B cell (primary cell): ENCODE measurements at regions of chr15 and their contacts with region 1.

Region 1: GRCh38 chr15:101008158-101009139 is 89.3 kb downstream of the LRRK1 start:
- DNase-seq: peak; percentile 91
- ATAC-seq: peak; percentile 95
- H3K4me3 ChIP-seq: peak overlapping the region; percentile 16 to 78 (median 59)
- H3K4me3 Mint-ChIP-seq: peak overlapping the region; percentile 92
- H3K27ac ChIP-seq: no peak overlapping the region
- H3K27ac Mint-ChIP-seq: peak overlapping the region; percentile 42
- H3K4me1 ChIP-seq: peaks cover 10 to 20% of the 10 kb centered on the region in 2 donors
- H3K4me1 Mint-ChIP-seq: peaks cover 20% of the 10 kb centered on the region
- H3K27me3 ChIP-seq: no peaks in the 10 kb centered on the region
- H3K27me3 Mint-ChIP-seq: no peaks in the 10 kb centered on the region
- CTCF ChIP-seq: peak; percentile 96

Region 2: DNA sequence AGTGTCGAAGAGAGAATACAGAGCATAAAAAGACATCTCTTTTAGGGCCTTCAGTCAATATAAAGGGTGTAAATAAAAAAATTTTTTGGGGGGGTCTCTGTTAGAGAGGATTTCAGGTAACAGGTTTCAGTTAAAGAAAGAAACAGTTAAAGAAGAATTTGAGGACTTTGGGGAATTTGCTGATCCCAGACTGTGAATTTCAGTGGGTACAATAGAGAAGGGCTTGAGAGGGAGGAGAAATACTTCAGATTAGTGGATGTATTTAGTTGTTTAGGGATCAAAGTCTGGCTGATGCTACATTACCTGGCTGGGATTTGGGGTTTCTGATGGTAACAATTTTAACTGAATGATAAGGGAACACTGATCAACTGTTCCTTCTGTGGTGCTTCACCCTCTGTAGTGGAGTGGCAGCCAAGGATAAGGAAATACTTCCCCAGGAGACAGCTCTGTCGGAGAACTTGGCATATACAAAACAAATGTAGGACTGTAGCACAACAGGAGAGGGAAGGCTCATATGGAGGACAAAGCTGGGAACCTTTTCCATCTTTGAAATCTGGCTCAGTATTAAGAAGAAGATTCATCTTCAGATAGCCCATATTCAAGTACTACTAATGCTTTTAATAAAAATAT is 1363.4 kb before region 1 on chr15:
- CTCF ChIA-PET with region 1: no interaction called
- POLR2A ChIA-PET with region 1: no interaction called
- intact Hi-C with region 1: no loop called
- DNase-seq: no peak
- ATAC-seq: no peak
- H3K4me3 ChIP-seq: no peak overlapping the region
- H3K4me3 Mint-ChIP-seq: no peak overlapping the region
- H3K27ac ChIP-seq: no peak overlapping the region
- H3K27ac Mint-ChIP-seq: peak overlapping the region; percentile 34
- H3K4me1 ChIP-seq: no peaks in the 10 kb centered on the region
- H3K4me1 Mint-ChIP-seq: peaks cover 3% of the 10 kb centered on the region
- H3K27me3 ChIP-seq: no peaks in the 10 kb centered on the region
- H3K27me3 Mint-ChIP-seq: no peaks in the 10 kb centered on the region
- CTCF ChIP-seq: no peak

Region 3: GRCh38 chr15:99928429-99928981 is 1079.9 kb before region 1 on chr15:
- CTCF ChIA-PET with region 1: interaction called, 3 read pairs
- POLR2A ChIA-PET with region 1: no interaction called
- intact Hi-C with region 1: loop called (anchors 5 kb)
- DNase-seq: peak; percentile 92
- ATAC-seq: peak; percentile 91
- H3K4me3 ChIP-seq: peak overlapping the region; percentile 44 to 72 (median 60)
- H3K4me3 Mint-ChIP-seq: peak overlapping the region; percentile 89
- H3K27ac ChIP-seq: peak overlapping the region; percentile 72 to 75
- H3K27ac Mint-ChIP-seq: peak overlapping the region; percentile 91
- H3K4me1 ChIP-seq: peaks cover 11 to 16% of the 10 kb centered on the region in 2 donors
- H3K4me1 Mint-ChIP-seq: peaks cover 10% of the 10 kb centered on the region
- H3K27me3 ChIP-seq: peaks cover 0 to 2% (median 0%) of the 10 kb centered on the region in 4 experiments
- H3K27me3 Mint-ChIP-seq: peaks cover 5% of the 10 kb centered on the region
- CTCF ChIP-seq: peak; percentile 61

Region 4: DNA sequence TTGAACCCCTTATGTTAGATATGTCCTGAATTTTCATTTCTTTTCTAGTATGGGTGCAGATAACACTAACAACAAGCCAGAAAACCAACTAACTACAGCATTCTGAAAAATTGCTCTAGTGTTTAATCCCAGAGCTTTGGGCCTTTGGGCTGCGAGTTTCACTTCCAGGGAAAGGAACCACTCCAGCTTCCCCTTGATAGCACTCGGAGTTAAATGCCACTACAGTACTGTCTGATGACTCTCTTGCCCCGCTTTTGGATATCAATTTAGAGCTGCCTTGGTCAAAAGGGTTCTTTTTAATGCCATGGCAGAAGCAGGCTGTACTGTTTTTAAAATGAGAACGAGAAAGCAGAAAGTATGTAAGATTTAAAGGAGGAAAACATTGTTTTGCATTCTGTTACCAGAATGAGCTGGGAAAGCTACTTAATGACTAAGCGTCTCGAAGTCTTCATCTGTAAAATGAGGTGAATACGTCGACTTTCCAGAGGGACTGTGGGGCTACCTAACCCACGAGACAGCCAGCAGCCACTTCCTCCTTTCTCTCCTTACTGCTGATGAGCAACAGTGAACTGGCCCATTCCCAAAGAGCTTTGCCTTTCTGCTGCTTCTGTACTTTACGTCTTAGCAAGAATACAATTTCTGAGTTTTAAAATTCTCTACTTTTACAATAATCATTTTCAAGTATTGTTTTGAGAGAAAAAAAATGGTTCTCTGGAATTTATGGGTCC is 975.9 kb before region 1 on chr15:
- CTCF ChIA-PET with region 1: no interaction called
- POLR2A ChIA-PET with region 1: no interaction called
- intact Hi-C with region 1: no loop called
- DNase-seq: no peak
- ATAC-seq: no peak
- H3K4me3 ChIP-seq: no peak overlapping the region
- H3K4me3 Mint-ChIP-seq: no peak overlapping the region
- H3K27ac ChIP-seq: no peak overlapping the region
- H3K27ac Mint-ChIP-seq: no peak overlapping the region
- H3K4me1 ChIP-seq: no peaks in the 10 kb centered on the region
- H3K4me1 Mint-ChIP-seq: no peaks in the 10 kb centered on the region
- H3K27me3 ChIP-seq: no peaks in the 10 kb centered on the region
- H3K27me3 Mint-ChIP-seq: peaks cover 6% of the 10 kb centered on the region
- CTCF ChIP-seq: no peak

Region 5: DNA sequence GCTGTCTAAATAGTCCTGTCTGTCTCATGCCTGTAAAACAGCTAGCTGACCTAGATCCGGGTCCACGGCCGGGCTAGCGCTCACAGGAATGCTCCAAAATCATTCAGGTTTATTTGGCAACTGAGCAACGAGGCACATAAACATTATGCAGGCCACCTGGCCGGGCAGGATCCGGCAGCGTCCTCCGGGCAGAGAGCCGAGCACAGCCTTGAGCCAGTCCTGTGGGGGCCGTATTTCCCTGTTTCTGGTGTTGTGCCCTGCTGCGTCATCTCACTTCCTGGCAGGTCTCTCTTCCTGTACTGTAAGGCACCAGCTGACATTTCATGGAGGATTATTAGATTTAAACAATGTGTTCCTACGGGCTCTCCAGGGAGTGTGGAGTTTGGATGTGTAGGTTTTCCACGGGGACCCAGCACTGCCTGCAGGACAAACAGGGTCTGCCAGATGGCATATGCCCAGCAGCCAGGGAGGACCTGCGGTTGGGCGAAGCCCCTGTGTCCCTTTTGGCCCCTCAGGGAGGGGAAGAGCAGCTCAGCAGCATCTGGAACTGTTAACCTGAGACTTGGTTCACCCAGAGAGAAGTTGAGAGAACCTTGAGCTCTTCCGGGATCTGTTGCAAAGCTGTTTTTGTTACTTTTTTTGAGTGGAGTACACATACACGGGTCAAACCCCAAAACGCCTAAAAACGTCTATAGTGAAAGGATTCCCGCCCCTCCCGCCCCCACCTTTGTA is 105.8 kb before region 1 on chr15:
- CTCF ChIA-PET with region 1: interaction called, 29 read pairs
- POLR2A ChIA-PET with region 1: no interaction called
- intact Hi-C with region 1: no loop called
- DNase-seq: no peak
- ATAC-seq: no peak
- H3K4me3 ChIP-seq: peak overlapping the region in 1 of 5 experiments; percentile 5
- H3K4me3 Mint-ChIP-seq: no peak overlapping the region
- H3K27ac ChIP-seq: no peak overlapping the region
- H3K27ac Mint-ChIP-seq: no peak overlapping the region
- H3K4me1 ChIP-seq: peaks cover 0 to 3% of the 10 kb centered on the region in 2 donors
- H3K4me1 Mint-ChIP-seq: peaks cover 1% of the 10 kb centered on the region
- H3K27me3 ChIP-seq: peaks cover 0 to 3% (median 0%) of the 10 kb centered on the region in 4 experiments
- H3K27me3 Mint-ChIP-seq: peaks cover 18% of the 10 kb centered on the region
- CTCF ChIP-seq: no peak

Region 6: GRCh38 chr15:100934726-100935125 is 73.7 kb before region 1 on chr15:
- CTCF ChIA-PET with region 1: interaction called, 72 read pairs
- POLR2A ChIA-PET with region 1: no interaction called
- intact Hi-C with region 1: no loop called
- DNase-seq: peak; percentile 50
- ATAC-seq: peak; percentile 65
- H3K4me3 ChIP-seq: no peak overlapping the region
- H3K4me3 Mint-ChIP-seq: peak overlapping the region; percentile 35
- H3K27ac ChIP-seq: no peak overlapping the region
- H3K27ac Mint-ChIP-seq: peak overlapping the region; percentile 73
- H3K4me1 ChIP-seq: peaks cover 50 to 51% of the 10 kb centered on the region in 2 donors
- H3K4me1 Mint-ChIP-seq: peaks cover 52% of the 10 kb centered on the region
- H3K27me3 ChIP-seq: no peaks in the 10 kb centered on the region
- H3K27me3 Mint-ChIP-seq: no peaks in the 10 kb centered on the region
- CTCF ChIP-seq: no peak

Region 7: GRCh38 chr15:100968050-100968966 is 40.1 kb before region 1 on chr15:
- CTCF ChIA-PET with region 1: interaction called, 25 read pairs
- POLR2A ChIA-PET with region 1: no interaction called
- intact Hi-C with region 1: no loop called
- DNase-seq: no peak
- ATAC-seq: no peak
- H3K4me3 ChIP-seq: no peak overlapping the region
- H3K4me3 Mint-ChIP-seq: no peak overlapping the region
- H3K27ac ChIP-seq: no peak overlapping the region
- H3K27ac Mint-ChIP-seq: no peak overlapping the region
- H3K4me1 ChIP-seq: peaks cover 5 to 6% of the 10 kb centered on the region in 2 donors
- H3K4me1 Mint-ChIP-seq: peaks cover 12% of the 10 kb centered on the region
- H3K27me3 ChIP-seq: peaks cover 0 to 10% (median 4%) of the 10 kb centered on the region in 4 experiments
- H3K27me3 Mint-ChIP-seq: peaks cover 6% of the 10 kb centered on the region
- CTCF ChIP-seq: no peak

Region 8: DNA sequence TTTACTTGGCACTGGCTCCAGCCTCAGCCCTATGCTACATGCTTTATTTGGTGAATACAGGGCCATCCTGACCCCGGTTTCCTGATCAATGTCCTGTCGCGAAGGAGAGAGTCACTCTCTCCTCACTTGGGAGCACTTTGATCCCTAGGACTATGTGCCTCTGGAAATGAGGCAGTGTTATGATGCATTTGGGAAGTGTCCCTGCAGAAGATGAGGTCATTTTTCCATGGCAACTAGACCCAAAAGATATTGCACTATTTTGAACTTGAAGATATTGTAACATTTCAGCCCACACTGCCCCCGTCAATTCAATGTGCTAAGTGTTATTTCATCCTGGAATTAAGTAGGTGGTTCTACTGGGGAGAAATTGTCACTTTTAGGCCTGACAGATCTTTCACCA is 21.3 kb before region 1 on chr15:
- CTCF ChIA-PET with region 1: interaction called, 14 read pairs
- POLR2A ChIA-PET with region 1: no interaction called
- intact Hi-C with region 1: no loop called
- DNase-seq: no peak
- ATAC-seq: no peak
- H3K4me3 ChIP-seq: no peak overlapping the region
- H3K4me3 Mint-ChIP-seq: no peak overlapping the region
- H3K27ac ChIP-seq: no peak overlapping the region
- H3K27ac Mint-ChIP-seq: no peak overlapping the region
- H3K4me1 ChIP-seq: no peaks in the 10 kb centered on the region
- H3K4me1 Mint-ChIP-seq: no peaks in the 10 kb centered on the region
- H3K27me3 ChIP-seq: no peaks in the 10 kb centered on the region
- H3K27me3 Mint-ChIP-seq: no peaks in the 10 kb centered on the region
- CTCF ChIP-seq: no peak

Region 9: GRCh38 chr15:101088788-101089583 is 80.5 kb after region 1 on chr15:
- CTCF ChIA-PET with region 1: no interaction called
- POLR2A ChIA-PET with region 1: no interaction called
- intact Hi-C with region 1: no loop called
- DNase-seq: peak; percentile 80
- ATAC-seq: peak; percentile 97
- H3K4me3 ChIP-seq: no peak overlapping the region
- H3K4me3 Mint-ChIP-seq: no peak overlapping the region
- H3K27ac ChIP-seq: no peak overlapping the region
- H3K27ac Mint-ChIP-seq: no peak overlapping the region
- H3K4me1 ChIP-seq: peaks cover 0 to 6% of the 10 kb centered on the region in 2 donors
- H3K4me1 Mint-ChIP-seq: peaks cover 2% of the 10 kb centered on the region
- H3K27me3 ChIP-seq: peaks cover 0 to 3% (median 0%) of the 10 kb centered on the region in 4 experiments
- H3K27me3 Mint-ChIP-seq: no peaks in the 10 kb centered on the region
- CTCF ChIP-seq: peak; percentile 99

Region 10: GRCh38 chr15:101258238-101259144 is 250.0 kb after region 1 on chr15:
- CTCF ChIA-PET with region 1: interaction called, 133 read pairs
- POLR2A ChIA-PET with region 1: no interaction called
- intact Hi-C with region 1: no loop called
- DNase-seq: peak; percentile 75
- ATAC-seq: peak; percentile 64
- H3K4me3 ChIP-seq: no peak overlapping the region
- H3K4me3 Mint-ChIP-seq: no peak overlapping the region
- H3K27ac ChIP-seq: no peak overlapping the region
- H3K27ac Mint-ChIP-seq: no peak overlapping the region
- H3K4me1 ChIP-seq: no peaks in the 10 kb centered on the region
- H3K4me1 Mint-ChIP-seq: no peaks in the 10 kb centered on the region
- H3K27me3 ChIP-seq: peaks cover 0 to 14% (median 3%) of the 10 kb centered on the region in 4 experiments
- H3K27me3 Mint-ChIP-seq: peaks cover 9% of the 10 kb centered on the region
- CTCF ChIP-seq: peak; percentile 91